ENCODE measurements at regions of chr13 and their contacts with region 1.

Region 1: GRCh38 chr13:94362411-94362909 is 117.0 kb downstream of the DCT start:
- DNase-seq: peak; percentile 90
- H3K4me3 Mint-ChIP-seq: no peak overlapping the region
- H3K27ac Mint-ChIP-seq: no peak overlapping the region
- H3K4me1 Mint-ChIP-seq: peaks cover 2% of the 10 kb centered on the region
- H3K27me3 Mint-ChIP-seq: peaks cover 7% of the 10 kb centered on the region

Region 2: DNA sequence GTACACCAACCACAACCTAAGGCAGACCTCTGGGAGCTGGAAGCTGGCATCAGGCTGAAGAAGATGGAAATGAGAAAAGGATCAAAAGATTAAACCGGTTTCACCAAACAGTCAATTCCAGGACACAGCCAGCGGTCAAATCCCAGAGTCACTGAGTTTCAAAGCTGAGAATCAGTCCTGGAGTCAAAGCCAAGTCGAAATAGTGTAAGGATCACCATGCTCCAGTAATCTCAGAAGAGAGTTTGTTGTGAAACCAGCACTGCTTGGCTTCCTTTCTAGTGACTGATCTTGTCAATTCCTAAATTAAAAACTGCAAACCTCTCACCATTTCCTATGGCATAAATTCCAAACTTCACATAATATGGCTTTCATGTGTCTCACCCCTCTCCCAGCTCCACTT is 937.0 kb before region 1 on chr13:
- intact Hi-C with region 1: loop called (anchors 10 kb)
- DNase-seq: no peak
- H3K4me3 Mint-ChIP-seq: no peak overlapping the region
- H3K27ac Mint-ChIP-seq: no peak overlapping the region
- H3K4me1 Mint-ChIP-seq: no peaks in the 10 kb centered on the region
- H3K27me3 Mint-ChIP-seq: no peaks in the 10 kb centered on the region

Region 3: DNA sequence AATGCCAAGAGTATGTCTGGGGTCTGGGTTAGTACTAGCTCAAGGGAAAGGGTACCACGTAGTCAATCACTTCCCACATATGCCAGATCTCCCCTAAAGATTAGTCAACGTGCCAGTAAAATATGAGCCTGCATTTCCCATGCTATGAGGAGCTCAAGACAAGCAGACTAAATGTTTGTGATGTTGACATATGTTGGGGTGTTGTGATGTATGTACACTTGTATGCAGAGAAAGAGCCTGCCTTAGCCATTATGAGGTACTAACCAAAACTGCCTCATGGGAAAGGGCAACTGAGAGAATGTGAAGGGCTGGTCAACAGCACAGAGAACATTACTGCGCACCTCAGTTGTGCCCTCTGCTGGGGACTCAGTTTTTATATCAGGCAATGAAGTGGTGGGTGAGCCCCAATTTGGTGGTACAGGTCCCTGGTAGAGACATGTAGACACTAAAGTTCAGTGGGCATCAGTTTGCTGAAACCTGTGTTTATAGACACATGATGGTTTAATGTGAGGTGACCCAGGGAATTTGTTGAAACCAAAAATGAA is 170.0 kb before region 1 on chr13:
- intact Hi-C with region 1: loop called (anchors 1 kb)
- DNase-seq: no peak
- H3K4me3 Mint-ChIP-seq: no peak overlapping the region
- H3K27ac Mint-ChIP-seq: no peak overlapping the region
- H3K4me1 Mint-ChIP-seq: no peaks in the 10 kb centered on the region
- H3K27me3 Mint-ChIP-seq: peaks cover 3% of the 10 kb centered on the region

Region 4: DNA sequence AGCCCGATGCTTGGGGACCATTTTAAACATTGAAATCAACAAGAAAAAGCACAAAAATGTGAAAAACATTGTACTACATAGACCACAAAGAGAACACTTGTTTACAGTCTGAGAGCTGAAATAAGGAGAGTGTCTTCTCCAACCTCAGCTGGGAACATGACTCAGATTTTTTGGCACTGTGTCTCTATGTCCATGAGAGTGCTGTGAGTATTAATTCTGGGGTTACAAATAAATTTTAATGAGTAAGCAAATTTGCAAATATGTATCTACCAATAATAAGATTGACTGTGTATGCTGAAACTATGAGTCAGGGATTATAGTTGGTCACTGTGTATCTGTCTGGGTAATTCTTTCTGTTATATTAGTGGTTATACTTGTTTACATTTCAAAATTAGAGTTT is 57.0 kb before region 1 on chr13:
- intact Hi-C with region 1: no loop called
- DNase-seq: no peak
- H3K4me3 Mint-ChIP-seq: no peak overlapping the region
- H3K27ac Mint-ChIP-seq: no peak overlapping the region
- H3K4me1 Mint-ChIP-seq: peaks cover 5% of the 10 kb centered on the region
- H3K27me3 Mint-ChIP-seq: peaks cover 9% of the 10 kb centered on the region